Posterior vena cava (tissue), 2 donors: ENCODE measurements at regions of chr12 and their contacts with region 1.

Region 1: GRCh38 chr12:120428597-120429229 is 9.2 kb upstream of the COX6A1 start:
- DNase-seq: no peak

Region 2: GRCh38 chr12:120041386-120042231 is 387.1 kb before region 1 on chr12:
- intact Hi-C with region 1: no loop called
- DNase-seq: no peak

Region 3: DNA sequence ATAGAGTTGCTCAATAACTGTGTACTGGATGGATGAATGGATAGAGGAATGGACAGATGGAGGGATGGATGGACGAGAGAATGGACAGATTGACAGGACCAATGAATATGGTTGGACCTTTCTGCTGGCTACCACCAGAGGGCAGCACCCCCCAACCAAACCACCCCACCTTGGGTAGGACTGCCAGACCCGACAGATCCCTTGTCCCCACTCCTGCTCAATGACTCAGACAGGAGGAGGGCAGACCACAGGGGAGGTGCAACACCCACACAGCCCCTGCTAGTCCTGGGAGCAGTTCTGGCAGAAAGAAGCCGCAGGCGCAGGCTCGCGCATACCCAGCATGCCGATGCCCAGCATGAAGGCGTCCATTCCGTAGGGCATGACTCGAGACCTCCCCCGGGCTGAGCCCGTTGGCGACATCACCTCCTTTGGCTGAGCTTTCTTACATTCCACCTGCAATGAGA is 72.1 kb before region 1 on chr12:
- intact Hi-C with region 1: loop called in 1 of 2 experiments (anchors 5 kb)
- DNase-seq: peak; percentile 88

Region 4: DNA sequence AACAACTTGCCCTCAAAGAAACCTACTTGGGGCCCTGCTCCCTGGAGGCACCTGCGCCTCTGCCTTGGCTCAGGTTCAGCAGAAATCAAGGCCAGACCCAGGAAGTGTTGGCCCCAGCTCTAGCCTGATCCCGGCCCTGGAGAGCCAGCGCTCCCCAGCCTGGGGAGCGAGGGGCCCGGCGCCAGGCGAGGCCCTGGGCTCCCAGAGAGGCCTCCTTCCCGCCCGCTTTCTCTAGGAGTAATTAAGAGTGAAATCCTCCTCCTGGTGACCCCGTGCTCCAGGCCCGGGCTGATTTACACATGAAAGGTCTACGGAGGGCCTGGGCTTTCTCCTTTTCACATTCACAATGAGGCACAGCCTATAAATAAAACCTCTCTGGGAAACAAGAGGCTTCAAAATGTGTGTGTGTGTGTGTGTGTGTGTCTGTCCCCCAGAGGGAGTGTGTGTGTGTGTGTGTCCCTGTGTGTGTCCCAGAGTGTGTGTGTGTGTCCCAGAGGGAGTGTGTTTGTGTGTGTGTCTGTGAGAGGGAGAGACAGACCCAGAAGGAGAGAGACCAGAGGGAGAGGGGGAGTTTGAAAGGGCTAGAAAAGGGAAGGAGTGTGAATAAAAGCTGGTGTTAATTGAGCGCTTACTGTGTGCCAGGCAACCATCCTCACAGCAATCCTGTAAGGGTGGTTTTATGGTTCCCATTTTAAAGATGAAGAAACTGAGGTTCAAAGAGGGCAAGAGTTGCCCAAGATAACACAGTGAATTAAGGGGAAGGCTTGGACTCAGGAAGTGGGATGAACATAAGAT is 14.6 kb before region 1 on chr12:
- intact Hi-C with region 1: no loop called
- DNase-seq: no peak